GM18951 (cell line): ENCODE measurements at regions of chr20 and their contacts with region 1.

Region 1: DNA sequence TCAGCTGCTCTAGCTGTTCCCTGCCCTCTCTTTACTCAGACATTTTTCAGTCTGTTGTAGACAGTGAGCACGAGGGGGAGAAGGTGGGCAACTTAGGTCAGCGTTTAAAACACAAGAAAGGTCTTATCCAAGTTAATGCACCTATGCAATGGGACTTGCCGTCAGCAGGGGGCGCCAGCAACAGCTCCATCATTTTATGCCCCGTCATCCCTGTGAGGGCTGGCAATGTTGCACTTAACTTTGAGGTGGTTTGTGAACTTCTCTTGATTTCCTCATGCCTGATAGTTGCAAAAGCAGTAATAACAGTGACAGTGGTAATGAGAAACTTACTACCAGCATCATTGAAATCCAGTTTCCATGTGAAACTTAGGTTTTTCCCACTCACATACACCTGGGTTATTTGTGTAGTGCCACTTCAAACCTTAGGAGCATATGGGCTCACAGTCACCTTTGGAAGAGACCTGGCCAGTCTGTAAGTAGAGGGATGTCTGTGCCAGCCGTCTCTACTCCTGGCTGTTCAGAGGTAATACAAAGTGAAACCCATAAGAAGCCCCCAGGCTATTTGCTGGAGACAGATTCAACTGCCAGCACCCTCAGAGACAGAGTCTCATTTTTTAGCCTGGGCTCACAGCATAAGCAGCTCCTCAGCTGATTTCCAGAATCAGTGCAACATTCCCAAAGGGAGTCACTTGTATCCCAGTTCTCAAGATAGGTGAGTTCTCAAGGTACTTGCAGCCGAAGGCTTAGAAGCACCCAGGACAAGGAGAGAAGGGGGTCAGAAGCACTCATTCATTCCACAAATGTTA is 44.8 kb upstream of the ID1 start:
- POLR2A ChIP-seq: no peak

Region 2: GRCh38 chr20:31605031-31605901 is 45.0 kb after region 1 on chr20 and contains the start of gene ID1:
- in situ Hi-C with region 1: loop called (anchors 5 kb)
- POLR2A ChIP-seq: no peak

Region 3: DNA sequence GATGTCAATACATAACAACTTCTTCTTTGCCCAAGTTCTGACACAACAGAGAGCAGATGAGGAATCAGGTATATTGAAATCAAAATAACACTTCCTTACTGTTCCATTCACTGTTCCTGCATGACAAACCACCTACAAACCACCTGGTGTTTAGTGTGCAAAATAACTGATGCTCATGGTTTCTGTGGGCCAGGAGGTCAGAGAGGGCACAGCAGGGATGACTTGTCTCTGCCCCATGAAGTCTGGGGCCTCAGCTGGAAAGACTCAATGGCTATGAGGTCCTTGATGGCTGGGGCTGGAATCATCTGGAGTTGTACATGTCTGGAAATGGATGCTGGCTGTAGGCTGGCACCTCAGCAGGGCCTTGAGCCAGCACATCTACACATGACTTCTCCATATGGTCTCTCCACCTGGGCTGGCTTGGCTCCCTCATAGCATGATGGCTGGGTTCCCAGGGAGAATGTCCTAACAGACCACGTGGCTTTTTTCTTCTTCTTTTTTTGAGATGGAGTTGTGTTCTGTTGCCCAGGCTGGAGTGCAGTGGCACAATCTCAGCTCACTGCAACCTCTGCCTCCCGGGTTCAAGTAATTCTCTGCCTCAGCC is 70.0 kb after region 1 on chr20:
- in situ Hi-C with region 1: no loop called
- POLR2A ChIP-seq: no peak

Region 4: GRCh38 chr20:31723319-31724078 is 163.2 kb after region 1 on chr20:
- in situ Hi-C with region 1: loop called (anchors 10 kb)
- POLR2A ChIP-seq: peak; percentile 66